ENCODE measurements at regions of chr6 and their contacts with region 1.

Region 1: GRCh38 chr6:10505529-10505928 is 15.6 kb upstream of the GCNT2 start:
- DNase-seq: no peak
- ATAC-seq: no peak
- H3K4me3 ChIP-seq: no peak overlapping the region
- H3K27ac ChIP-seq: no peak overlapping the region
- H3K4me1 ChIP-seq: no peaks in the 10 kb centered on the region
- H3K27me3 ChIP-seq: no peaks in the 10 kb centered on the region

Region 2: DNA sequence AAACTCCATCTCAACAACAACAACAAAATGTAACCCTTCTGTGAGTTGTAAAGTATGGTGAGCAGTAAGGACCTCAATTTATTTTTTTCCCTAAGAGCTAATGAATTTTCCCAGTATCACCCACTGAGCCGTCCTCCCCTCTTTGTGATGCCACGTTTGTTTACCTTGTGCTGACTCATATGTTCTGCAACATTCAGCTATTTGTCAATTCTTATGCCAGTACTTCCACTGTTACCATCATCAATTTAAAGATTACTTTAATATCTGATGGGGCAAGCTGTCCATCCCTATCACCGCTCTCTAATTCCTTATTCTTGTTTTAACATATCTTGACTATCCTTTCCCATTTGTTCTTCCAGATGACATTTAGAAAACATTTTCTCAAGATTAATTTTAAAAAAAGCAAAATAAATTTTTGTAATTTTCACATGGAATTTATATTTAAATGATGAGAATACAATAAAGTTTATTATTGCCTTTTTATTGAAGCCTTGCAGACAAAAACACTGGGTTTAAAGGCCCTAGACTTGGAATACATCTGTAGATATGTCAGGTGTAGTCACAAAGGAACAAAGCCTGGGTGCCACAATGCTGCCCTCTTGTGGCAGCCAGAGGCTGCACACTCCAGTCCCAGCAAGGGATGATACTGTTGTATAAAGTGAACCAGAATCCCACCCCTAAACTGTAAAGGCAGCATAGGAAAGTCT is 295.5 kb after region 1 on chr6:
- intact Hi-C with region 1: loop called in 1 of 2 experiments (anchors 10 kb)
- DNase-seq: peak in 1 of 2 donors; percentile 81
- ATAC-seq: peak; percentile 86
- H3K4me3 ChIP-seq: no peak overlapping the region
- H3K27ac ChIP-seq: no peak overlapping the region
- H3K4me1 ChIP-seq: no peaks in the 10 kb centered on the region
- H3K27me3 ChIP-seq: no peaks in the 10 kb centered on the region

Measured in aorta (tissue), 5 donors.